ENCODE measurements at regions of chr2 and their contacts with region 1.

Region 1: DNA sequence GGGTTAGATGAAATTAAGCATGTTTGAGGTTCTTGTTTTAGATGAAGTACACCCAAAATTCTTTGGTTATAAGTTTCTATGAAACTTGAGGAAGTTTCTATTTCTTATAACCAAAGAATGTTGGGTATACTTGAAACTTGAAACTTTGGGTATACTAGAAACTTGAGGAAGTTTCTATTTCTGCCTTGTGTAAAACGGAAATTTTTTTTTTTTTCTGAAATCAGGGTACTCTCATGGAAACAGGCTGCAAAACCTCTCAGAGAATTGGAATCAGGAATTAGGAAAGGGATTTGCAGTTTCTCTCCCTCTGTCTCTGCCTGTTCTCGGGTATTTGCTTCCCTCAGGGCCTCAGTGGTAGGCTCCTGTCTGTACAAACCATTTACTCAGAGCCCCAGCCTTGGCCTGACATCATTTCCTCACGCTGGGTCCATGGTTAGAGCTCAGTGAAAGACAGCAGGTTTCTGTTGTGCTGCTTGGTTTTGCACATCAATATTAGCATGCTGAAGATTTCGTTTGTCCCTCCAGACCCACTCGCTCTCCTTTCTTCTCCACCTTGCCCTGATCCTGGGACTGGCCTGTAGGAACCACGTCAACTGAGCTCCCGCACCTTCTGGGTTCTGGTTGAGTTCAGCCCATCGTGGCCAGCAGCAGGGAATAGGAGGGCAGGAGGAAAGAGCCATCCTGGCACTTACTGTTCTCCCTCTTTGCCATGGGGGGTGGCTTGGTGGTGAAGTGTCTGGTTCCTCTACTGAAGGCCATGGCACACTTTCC is 106.4 kb downstream of the POLR1A start:
- DNase-seq: peak; percentile 44 to 55
- ATAC-seq: no peak
- H3K4me3 ChIP-seq: no peak overlapping the region
- H3K27ac ChIP-seq: peak overlapping the region; percentile 24 to 93
- H3K4me1 ChIP-seq: peaks cover 0 to 6% of the 10 kb centered on the region in 2 donors
- H3K27me3 ChIP-seq: no peaks in the 10 kb centered on the region

Region 2: DNA sequence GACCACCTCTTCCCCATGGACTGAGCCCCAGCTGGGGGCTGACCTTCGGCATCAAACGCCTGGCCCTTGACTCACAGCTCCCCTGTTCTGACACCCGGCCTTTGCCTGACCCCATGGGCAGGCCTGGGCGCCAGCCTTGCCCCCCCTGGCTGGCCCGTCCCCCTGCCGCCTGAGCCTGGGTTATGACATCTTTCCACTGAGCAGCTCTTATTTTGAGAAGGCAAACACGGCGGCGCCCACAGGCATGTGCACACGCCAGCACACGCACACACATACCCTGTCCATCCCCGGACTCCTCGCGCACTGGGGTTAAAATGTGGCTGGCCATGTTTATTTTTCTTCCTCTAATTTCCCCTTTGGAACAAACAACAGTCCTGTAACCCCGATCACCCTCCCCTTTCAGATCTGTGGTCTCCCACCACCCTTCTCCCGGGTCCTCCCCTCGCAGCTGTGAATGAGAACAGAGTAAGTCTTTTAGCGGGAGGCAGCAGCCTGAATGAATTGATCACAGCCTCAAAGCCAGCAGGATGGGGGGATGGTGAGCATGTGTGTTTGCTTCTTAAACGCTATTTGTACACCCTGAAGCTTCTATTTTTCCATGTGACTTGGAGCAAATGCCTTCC is 257.3 kb before region 1 on chr2:
- intact Hi-C with region 1: loop called in 1 of 2 experiments (anchors 10 kb)
- DNase-seq: peak; percentile 90 to 93
- ATAC-seq: peak; percentile 81
- H3K4me3 ChIP-seq: no peak overlapping the region
- H3K27ac ChIP-seq: peak overlapping the region; percentile 73 to 98
- H3K4me1 ChIP-seq: peaks cover 0 to 11% of the 10 kb centered on the region in 2 donors
- H3K27me3 ChIP-seq: no peaks in the 10 kb centered on the region

Region 3: GRCh38 chr2:86072271-86072858 is 73.1 kb after region 1 on chr2:
- intact Hi-C with region 1: loop called in 1 of 2 experiments (anchors 2 kb)
- DNase-seq: peak; percentile 86 to 89
- ATAC-seq: peak; percentile 93
- H3K4me3 ChIP-seq: no peak overlapping the region
- H3K27ac ChIP-seq: peak overlapping the region; percentile 15 to 85
- H3K4me1 ChIP-seq: peaks cover 0 to 3% of the 10 kb centered on the region in 2 donors
- H3K27me3 ChIP-seq: no peaks in the 10 kb centered on the region

Region 4: DNA sequence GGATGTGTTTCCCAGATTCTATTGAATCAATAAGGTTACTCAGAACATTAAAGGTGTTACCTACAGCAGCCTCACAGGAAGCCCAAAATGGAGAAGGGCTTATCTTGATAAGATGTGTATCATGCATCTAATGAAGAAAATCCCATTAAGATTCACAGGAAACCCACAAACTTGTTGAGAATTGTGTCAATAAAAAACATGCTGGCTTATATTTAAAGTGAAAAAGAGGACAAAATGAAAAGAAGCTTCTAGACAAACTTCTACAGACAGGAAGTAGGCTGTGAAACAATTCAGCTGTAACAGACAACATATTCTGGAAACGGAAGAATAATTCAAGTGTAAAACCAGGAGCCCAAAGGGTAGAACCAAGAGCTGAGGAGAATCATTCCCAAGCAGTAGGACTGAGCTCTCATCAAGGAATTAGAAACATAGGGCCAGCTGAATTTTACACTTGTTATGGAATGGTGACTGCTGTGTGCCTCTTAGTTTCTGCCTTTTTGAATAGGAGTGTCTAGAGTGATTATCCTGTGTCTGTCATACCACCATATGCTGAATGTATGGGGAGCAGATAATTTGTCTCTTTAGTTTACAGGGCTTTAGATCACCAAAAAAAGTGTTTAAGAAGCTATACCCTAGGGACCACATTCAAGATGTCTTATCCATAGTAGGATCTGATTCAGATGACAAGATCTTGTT is 186.4 kb after region 1 on chr2:
- intact Hi-C with region 1: no loop called
- DNase-seq: no peak
- ATAC-seq: no peak
- H3K4me3 ChIP-seq: no peak overlapping the region
- H3K27ac ChIP-seq: no peak overlapping the region
- H3K4me1 ChIP-seq: peaks cover 0 to 2% of the 10 kb centered on the region in 2 donors
- H3K27me3 ChIP-seq: no peaks in the 10 kb centered on the region